IMR-90 (cell line): ENCODE measurements at regions of chr13 and their contacts with region 1.

Region 1: GRCh38 chr13:110715395-110716235 is 2.1 kb downstream of the ING1 start:
- DNase-seq: peak; percentile 100
- ATAC-seq: peak; percentile 71
- H3K4me3 ChIP-seq: peak overlapping the region; percentile 90
- H3K27ac ChIP-seq: peak overlapping the region; percentile 67
- H3K4me1 ChIP-seq: no peaks in the 10 kb centered on the region; the same call in 1 of the 2 replicates
- H3K27me3 ChIP-seq: no peaks in the 10 kb centered on the region
- CTCF ChIP-seq: no peak
- POLR2A ChIP-seq: no peak
- RAD21 ChIP-seq: no peak

Region 2: GRCh38 chr13:110593430-110594130 is 122.0 kb before region 1 on chr13:
- CTCF ChIA-PET with region 1: no interaction called
- POLR2A ChIA-PET with region 1: no interaction called
- dilution Hi-C with region 1: no loop called
- in situ Hi-C with region 1: no loop called
- intact Hi-C with region 1: loop called (anchors 2 kb)
- DNase-seq: peak; percentile 57
- ATAC-seq: peak; percentile 81
- H3K4me3 ChIP-seq: no peak overlapping the region
- H3K27ac ChIP-seq: no peak overlapping the region
- H3K4me1 ChIP-seq: 0 out of 2 replicates have a peak, but pooled peaks cover 4% of the 10 kb centered on the region
- H3K27me3 ChIP-seq: peaks cover 2% of the 10 kb centered on the region; the same call in 1 of the 2 replicates
- CTCF ChIP-seq: peak; percentile 61
- POLR2A ChIP-seq: no peak
- RAD21 ChIP-seq: peak; percentile 66

Region 3: DNA sequence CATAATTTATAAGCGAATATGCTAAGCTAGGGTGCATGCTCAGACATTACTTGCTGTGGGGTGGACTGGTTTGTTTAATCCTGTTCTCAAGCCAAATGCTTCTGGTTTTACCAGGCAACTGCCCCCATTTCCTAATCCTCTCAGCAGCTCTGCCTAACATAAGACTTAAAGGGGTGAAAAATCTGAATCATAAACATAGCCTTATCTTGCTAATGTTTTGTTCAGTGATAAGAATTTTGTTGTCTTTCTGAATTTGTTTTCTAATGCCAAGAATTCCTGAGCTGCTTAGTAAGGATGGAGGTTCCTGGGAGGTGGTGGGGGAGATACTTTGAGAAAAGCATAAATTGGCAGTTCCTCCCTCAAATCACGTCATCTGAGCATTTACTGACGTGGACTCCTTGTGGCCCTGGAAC is 40.6 kb after region 1 on chr13:
- CTCF ChIA-PET with region 1: interaction called, 3 read pairs
- POLR2A ChIA-PET with region 1: no interaction called
- dilution Hi-C with region 1: no loop called
- in situ Hi-C with region 1: no loop called
- intact Hi-C with region 1: loop called (anchors 5 kb)
- DNase-seq: peak; percentile 95
- ATAC-seq: peak; percentile 87
- H3K4me3 ChIP-seq: no peak overlapping the region
- H3K27ac ChIP-seq: peak overlapping the region; percentile 43; the same call in 1 of the 2 replicates
- H3K4me1 ChIP-seq: peaks cover 18% of the 10 kb centered on the region
- H3K27me3 ChIP-seq: no peaks in the 10 kb centered on the region
- CTCF ChIP-seq: no peak
- POLR2A ChIP-seq: no peak
- RAD21 ChIP-seq: no peak

Region 4: DNA sequence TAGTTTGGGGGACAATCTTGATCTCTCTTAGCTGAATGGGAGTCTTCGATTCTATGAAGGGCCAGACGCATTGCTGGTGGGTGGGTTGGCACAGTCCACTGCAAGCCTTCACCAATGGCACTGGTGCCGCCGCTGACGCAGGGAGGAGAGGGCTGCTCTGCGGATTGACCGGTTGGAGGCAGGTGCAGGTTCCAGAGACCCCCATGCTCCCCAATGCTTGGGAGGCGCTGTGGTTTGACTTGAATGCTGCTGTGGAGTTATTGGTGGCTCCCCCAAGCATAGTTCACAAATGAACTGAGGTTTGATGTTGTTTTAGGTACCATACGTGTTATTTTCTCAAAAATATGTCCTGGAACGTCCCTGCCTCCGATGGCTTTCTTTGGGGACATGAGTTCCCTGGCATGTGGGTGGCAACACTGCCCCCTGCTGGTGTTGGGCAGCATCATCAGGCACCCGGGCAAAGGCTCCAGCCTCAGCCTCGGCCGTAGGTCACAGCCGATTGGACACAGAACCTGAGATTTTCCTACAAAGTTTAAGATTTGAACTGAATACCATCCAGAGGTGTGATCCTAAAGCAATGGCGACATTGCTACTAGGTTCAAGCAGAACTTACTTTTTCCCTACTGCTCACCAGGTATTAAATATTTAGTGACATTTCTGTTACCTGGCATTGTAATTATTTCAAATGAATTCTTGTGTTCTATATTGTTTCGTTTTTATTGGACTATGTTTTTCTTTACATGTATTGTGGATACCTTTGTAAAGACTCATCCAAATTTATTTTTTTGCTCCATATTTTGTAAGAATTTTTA is 103.8 kb after region 1 on chr13:
- CTCF ChIA-PET with region 1: interaction called, 5 read pairs
- POLR2A ChIA-PET with region 1: interaction called, 9 read pairs
- dilution Hi-C with region 1: no loop called
- in situ Hi-C with region 1: no loop called
- intact Hi-C with region 1: loop called (anchors 1 kb)
- DNase-seq: peak; percentile 58
- ATAC-seq: peak; percentile 99
- H3K4me3 ChIP-seq: no peak overlapping the region
- H3K27ac ChIP-seq: no peak overlapping the region
- H3K4me1 ChIP-seq: peaks cover 2% of the 10 kb centered on the region; the same call in 1 of the 2 replicates
- H3K27me3 ChIP-seq: peaks cover 2% of the 10 kb centered on the region; the same call in 1 of the 2 replicates
- CTCF ChIP-seq: peak; percentile 94
- POLR2A ChIP-seq: peak; percentile 28; the same call in 1 of the 2 replicates
- RAD21 ChIP-seq: peak; percentile 95

Region 5: GRCh38 chr13:110874508-110874960 is 158.9 kb after region 1 on chr13:
- CTCF ChIA-PET with region 1: no interaction called
- POLR2A ChIA-PET with region 1: no interaction called
- dilution Hi-C with region 1: no loop called
- in situ Hi-C with region 1: no loop called
- intact Hi-C with region 1: loop called (anchors 2 kb)
- DNase-seq: peak; percentile 46
- ATAC-seq: peak; percentile 80
- H3K4me3 ChIP-seq: peak overlapping the region; percentile 25
- H3K27ac ChIP-seq: no peak overlapping the region
- H3K4me1 ChIP-seq: peaks cover 7% of the 10 kb centered on the region; the same call in 1 of the 2 replicates
- H3K27me3 ChIP-seq: no peaks in the 10 kb centered on the region
- CTCF ChIP-seq: no peak
- POLR2A ChIP-seq: no peak
- RAD21 ChIP-seq: no peak